ENCODE measurements at regions of chr2 and their contacts with region 1.

Region 1: GRCh38 chr2:156400706-156401678 is 35.2 kb upstream of the GPD2 start:
- DNase-seq: peak; percentile 80
- H3K4me3 ChIP-seq: peak overlapping the region; percentile 48 to 56
- H3K27ac ChIP-seq: peak overlapping the region; percentile 93 to 94
- H3K4me1 ChIP-seq: no peaks in the 10 kb centered on the region
- H3K27me3 ChIP-seq: no peaks in the 10 kb centered on the region
- CTCF ChIP-seq: peak in 1 of 4 experiments; percentile 4
- POLR2A ChIP-seq: no peak

Region 2: DNA sequence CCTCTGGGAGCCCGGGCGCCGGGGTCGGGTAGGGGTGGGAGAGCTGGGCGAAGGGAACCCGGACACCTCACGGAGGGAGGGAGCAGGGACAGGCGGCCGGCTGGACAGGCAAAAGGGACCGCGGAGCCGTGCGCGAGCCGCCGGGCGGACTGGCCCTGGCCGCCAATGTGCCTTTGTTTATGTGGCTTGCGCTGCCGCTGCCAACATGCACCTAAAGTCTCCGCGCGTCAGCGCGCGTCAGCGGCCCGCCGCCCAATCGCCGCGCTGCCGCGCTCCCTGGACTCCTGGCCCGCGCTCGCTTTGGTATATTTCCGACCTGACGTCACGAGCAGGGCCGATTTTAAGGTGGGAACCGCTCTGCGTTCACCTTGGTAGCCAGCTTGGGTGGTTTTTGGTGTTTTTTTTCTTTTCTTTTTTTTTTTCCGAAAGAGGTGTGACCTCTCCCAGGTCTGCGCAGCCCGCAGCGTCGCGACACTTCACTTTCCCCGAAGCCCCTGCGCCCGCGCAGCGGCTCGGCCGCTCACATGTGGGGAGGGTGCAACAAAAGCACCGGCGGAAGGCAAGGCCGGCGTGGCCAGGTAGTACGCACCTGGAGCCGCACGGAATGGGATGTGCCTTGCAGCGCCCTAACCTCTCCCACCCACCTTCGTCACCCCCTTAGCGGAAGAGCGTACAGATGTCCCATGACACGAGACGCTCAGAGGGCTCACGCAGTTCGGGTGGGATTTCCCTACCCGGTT is 68.3 kb before region 1 on chr2 and contains the start of gene NR4A2:
- intact Hi-C with region 1: loop called (anchors 2 kb)
- DNase-seq: peak; percentile 93
- H3K4me3 ChIP-seq: peak within 1 kb of the TSS; percentile 84 to 88
- H3K27ac ChIP-seq: peak within 1 kb of the TSS; percentile 99
- H3K4me1 ChIP-seq: no peaks in the 10 kb centered on the region
- H3K27me3 ChIP-seq: no peaks in the 10 kb centered on the region
- CTCF ChIP-seq: peak in 2 of 4 experiments; percentile 6
- POLR2A ChIP-seq: peak; percentile 98
- total RNA-seq, gene NR4A2: 2.3 to 4.5 TPM

Region 3: DNA sequence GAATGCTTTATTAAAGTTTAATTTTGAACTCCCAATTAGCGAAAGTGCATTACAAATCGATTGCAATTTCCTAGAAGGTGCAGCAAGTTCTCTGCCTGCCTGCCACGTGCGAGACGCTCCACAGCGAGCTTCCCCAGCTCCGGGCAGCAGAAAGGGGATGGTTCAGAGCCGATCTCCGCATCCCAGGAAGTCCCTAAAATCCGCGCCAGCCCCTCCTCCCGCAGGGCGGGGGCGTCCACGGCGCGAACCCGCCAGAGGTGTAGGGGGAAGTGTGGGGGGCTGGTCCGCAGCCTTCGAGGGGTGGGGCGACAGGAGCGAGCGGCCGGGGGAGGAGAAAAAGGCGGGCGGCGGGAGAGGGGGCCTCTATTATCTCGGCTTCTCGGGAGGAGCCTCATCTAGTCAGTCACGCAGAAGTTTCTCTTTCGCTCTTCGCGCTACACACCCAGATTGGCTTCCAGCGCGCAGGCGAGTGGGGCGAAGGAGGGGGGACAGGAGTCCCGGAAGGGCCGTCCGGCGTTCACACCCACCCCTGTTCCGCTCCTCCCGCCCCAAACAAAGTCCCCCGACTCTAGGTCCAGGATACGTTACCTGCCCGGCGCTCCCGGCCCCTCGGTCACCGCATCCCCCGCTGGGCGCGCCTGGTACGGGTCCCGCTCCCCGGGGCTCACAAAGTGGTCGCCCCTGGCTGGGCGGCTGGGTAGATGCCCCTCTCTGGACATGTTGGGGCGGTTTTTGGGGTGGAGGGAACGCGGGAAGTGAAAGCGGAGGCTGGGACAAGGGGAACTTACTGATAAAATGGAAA is 59.3 kb before region 1 on chr2:
- intact Hi-C with region 1: loop called (anchors 2 kb)
- DNase-seq: peak; percentile 91
- H3K4me3 ChIP-seq: peak overlapping the region; percentile 92 to 94
- H3K27ac ChIP-seq: peak overlapping the region; percentile 99 to 100
- H3K4me1 ChIP-seq: no peaks in the 10 kb centered on the region
- H3K27me3 ChIP-seq: no peaks in the 10 kb centered on the region
- CTCF ChIP-seq: no peak
- POLR2A ChIP-seq: peak; percentile 74